ENCODE measurements at regions of chr9 and their contacts with region 1.

Region 1: DNA sequence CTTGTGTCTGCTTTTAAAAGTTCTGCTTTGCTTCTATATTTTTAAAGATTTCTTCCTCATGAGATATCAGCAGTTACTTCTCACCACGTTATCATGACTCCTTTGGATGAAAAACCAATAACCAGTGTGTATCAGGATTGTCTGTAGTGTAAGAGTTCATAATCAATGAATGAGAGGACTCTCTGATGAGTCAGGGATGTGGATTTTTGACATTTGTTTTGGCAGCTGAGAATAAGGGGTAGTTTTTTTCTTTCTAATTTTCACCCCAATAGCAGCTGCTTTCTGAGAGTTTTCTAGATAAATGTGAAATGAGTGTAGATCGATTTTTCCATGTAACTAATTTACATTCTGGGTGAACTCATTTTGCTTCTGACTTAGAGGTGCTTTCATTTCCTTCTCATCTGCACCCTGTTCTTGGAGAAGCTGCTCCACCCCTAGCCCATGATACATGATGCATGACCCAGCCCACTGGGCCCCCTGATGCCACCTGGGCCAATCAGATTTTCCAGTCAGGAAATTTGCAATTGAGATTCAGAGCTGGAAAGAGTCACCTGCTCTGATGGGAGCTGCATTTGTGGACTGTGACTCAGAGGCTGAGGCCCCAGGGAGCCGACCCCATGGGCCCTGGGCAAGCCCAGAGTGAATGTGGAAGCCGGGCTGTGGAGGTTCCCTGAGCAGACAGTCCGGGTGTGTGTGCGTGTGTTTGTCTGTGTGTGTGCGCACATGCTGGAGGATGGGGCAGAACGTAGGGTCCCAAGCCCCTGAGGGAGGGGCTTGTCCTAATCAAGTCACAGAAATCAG is 159.3 kb downstream of the RGS3 start:
- DNase-seq: peak; percentile 77
- H3K4me3 ChIP-seq: peak overlapping the region in 1 of 4 experiments; percentile 18; a peak in 1 of 8 replicates
- H3K27ac ChIP-seq: peak overlapping the region; percentile 88; the same call in 1 of the 2 replicates
- H3K4me1 ChIP-seq: peaks cover 6 to 23% (median 18%) of the 10 kb centered on the region in 4 experiments
- H3K27me3 ChIP-seq: no peaks in the 10 kb centered on the region; a peak in 3 of 7 replicates
- CTCF ChIP-seq: no peak
- EP300 ChIP-seq: peak in 1 of 2 experiments; percentile 78; a peak in 1 of 3 replicates
- POLR2A ChIP-seq: peak in 1 of 2 experiments; percentile 51; a peak in 2 of 3 replicates
- RAD21 ChIP-seq: no peak

Region 2: DNA sequence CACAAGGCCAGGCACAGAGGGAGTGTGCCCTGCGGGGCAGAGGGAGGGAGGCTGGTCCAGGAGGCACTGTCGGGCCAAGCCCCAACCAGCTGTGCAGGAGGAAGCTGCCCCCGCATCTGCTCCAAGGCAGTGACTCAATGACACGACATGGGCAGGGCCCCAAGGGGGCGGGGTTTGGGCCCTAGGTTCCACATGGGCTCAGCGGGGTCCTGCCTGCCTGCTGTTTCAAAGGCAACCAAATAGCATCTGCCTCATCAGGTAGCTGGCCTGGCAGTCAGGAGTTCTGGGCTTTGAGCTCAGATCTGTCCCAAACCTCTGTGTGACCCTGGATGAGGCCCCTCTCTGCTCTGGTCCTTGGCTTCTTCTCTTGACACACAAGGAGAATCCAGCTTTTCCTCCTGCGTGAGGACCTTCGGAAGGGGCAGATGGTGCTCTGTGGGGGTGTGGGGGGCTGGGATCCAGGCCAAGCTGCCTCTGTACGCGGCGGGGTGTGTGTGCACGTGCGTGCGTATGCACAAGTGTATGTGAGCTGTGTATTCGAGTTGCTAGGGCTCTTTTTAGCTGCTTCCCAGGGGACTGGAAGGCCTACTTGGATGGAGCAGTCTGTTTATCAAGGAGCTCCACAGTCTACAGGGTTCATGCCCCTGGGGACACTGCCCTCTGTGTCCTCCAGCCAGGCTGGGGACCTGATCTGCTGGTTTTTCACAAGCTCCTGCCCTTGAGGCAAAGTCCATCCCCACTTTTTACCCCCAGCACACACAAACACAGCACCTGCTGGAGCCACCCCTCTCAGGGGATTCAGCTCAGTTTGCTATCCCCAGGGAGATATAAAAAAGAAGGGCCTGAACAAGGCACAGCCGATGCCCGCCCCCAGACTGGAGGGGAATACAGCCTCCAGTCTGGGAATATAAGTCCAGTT is 20.4 kb before region 1 on chr9:
- CTCF ChIA-PET with region 1: interaction called, 9 read pairs
- POLR2A ChIA-PET with region 1: interaction called, 12 read pairs
- DNase-seq: peak; percentile 59 to 87
- H3K4me3 ChIP-seq: no peak overlapping the region; a peak in 1 of 8 replicates
- H3K27ac ChIP-seq: peak overlapping the region; percentile 39; the same call in 1 of the 2 replicates
- H3K4me1 ChIP-seq: peaks cover 0 to 17% (median 12%) of the 10 kb centered on the region in 4 experiments; a peak in 6 of 7 replicates
- H3K27me3 ChIP-seq: no peaks in the 10 kb centered on the region
- CTCF ChIP-seq: no peak
- EP300 ChIP-seq: no peak
- POLR2A ChIP-seq: 0 out of 3 replicates have a peak, but pooled peaks of 1 of the 2 experiments have one; percentile 43
- RAD21 ChIP-seq: no peak

Region 3: DNA sequence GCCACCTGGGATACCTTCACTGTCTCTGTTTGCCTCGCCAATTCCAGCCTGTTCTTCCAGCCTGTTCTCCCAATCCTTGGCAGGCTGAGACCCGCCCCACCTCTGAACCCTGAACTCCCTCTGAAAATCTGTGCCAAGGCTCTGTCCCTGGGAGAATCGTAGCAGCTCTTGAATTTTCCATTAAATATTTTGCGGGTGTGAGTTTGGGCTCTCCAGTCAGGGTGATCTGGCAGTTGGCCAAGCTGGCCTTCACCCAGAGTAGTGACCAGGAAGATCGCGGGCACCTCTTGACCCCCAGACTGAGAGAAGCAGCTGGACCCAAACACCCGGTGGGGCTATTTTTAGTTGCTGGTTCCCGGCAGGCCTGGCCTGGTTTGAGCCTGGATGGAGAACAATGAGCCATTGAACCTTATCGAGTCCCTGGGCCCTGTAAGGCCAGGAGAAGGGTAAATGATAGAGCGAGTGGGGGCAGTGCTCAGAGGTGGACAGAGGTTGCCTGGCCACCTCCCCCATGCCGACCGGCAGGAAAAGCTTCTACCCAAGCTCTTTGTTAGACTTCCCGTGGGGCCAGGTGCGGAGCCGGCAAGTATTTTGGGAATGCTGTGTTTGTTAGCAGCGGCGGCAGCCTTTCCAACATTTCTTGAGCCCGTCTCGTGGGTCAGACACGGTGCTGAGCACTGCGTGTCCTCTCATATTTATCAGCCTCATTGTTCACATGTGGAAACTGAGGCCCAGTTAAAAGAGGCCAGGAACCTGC is 13.1 kb before region 1 on chr9:
- CTCF ChIA-PET with region 1: interaction called, 7 read pairs
- POLR2A ChIA-PET with region 1: interaction called, 40 read pairs
- DNase-seq: no peak
- H3K4me3 ChIP-seq: peak overlapping the region in 1 of 4 experiments; percentile 27; a peak in 1 of 8 replicates
- H3K27ac ChIP-seq: peak overlapping the region; percentile 54
- H3K4me1 ChIP-seq: peaks cover 10 to 17% (median 12%) of the 10 kb centered on the region in 4 experiments
- H3K27me3 ChIP-seq: no peaks in the 10 kb centered on the region
- CTCF ChIP-seq: no peak
- EP300 ChIP-seq: peak in 1 of 2 experiments; percentile 37; a peak in 1 of 3 replicates
- POLR2A ChIP-seq: peak in 1 of 2 experiments; percentile 57; a peak in 2 of 3 replicates
- RAD21 ChIP-seq: peak in 1 of 2 experiments; percentile 1; a peak in 1 of 4 replicates

Region 4: GRCh38 chr9:113632776-113633590 is 10.2 kb after region 1 on chr9:
- CTCF ChIA-PET with region 1: interaction called, 10 read pairs
- POLR2A ChIA-PET with region 1: interaction called, 9 read pairs
- DNase-seq: no peak
- H3K4me3 ChIP-seq: no peak overlapping the region
- H3K27ac ChIP-seq: no peak overlapping the region
- H3K4me1 ChIP-seq: peaks cover 0 to 6% (median 4%) of the 10 kb centered on the region in 4 experiments; a peak in 3 of 7 replicates
- H3K27me3 ChIP-seq: peaks cover 0 to 1% (median 0%) of the 10 kb centered on the region in 4 experiments; a peak in 2 of 7 replicates
- CTCF ChIP-seq: no peak
- EP300 ChIP-seq: no peak
- POLR2A ChIP-seq: no peak
- RAD21 ChIP-seq: no peak

Region 5: DNA sequence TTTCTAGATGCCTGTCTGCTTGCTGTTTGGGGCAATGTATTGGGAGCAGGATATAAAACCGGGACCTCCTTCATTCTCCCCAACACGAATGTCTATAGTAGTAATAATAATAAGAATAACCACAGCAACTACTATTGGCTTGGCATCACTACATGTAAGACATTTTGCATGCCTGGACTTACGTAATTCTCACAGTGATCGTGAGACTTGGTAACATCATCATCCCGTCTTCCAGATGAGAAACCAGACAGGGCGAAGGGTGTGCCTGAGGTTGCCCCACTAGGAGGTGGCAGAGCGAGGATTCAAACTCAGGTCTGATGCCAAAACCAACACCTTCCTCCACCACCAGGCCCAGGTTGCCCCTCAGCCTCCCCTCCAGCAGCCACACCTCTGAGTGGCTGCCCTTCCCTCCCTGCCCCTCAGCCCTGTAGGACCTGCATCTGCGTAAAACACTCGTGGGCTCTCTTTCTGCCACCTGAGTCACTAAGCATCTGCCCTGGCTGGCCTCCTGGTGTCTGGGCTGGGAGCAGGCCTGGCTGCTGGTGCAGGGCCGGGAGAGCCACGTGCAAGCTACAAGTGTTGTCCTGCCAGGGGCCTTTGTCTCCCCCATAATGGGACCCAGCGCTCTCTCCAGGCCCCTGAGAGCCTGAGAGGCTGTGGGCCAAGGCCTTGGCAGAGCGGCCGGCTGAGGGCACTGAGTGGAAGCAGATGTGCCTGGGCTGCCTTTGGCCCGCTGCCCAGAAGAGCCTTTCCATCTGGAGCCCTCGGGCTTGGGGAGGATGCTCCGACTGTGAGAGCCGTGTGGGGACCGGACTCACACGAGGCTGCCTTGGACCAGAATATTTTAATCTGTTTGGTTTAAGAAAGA is 26.0 kb after region 1 on chr9:
- CTCF ChIA-PET with region 1: interaction called, 73 read pairs
- POLR2A ChIA-PET with region 1: interaction called, 6 read pairs
- DNase-seq: no peak
- H3K4me3 ChIP-seq: no peak overlapping the region
- H3K27ac ChIP-seq: no peak overlapping the region
- H3K4me1 ChIP-seq: peaks cover 0 to 15% (median 6%) of the 10 kb centered on the region in 4 experiments; a peak in 4 of 7 replicates
- H3K27me3 ChIP-seq: peaks cover 12 to 41% (median 32%) of the 10 kb centered on the region in 4 experiments
- CTCF ChIP-seq: no peak
- EP300 ChIP-seq: no peak
- POLR2A ChIP-seq: no peak
- RAD21 ChIP-seq: no peak

Region 6: GRCh38 chr9:113712023-113712422 is 89.2 kb after region 1 on chr9:
- CTCF ChIA-PET with region 1: no interaction called
- POLR2A ChIA-PET with region 1: no interaction called
- DNase-seq: peak in 1 of 2 experiments; percentile 13
- H3K4me3 ChIP-seq: no peak overlapping the region
- H3K27ac ChIP-seq: no peak overlapping the region
- H3K4me1 ChIP-seq: peaks cover 0 to 3% (median 0%) of the 10 kb centered on the region in 4 experiments; a peak in 1 of 7 replicates
- H3K27me3 ChIP-seq: peaks cover 0 to 3% (median 0%) of the 10 kb centered on the region in 4 experiments; a peak in 1 of 7 replicates
- CTCF ChIP-seq: no peak
- EP300 ChIP-seq: no peak
- POLR2A ChIP-seq: no peak
- RAD21 ChIP-seq: no peak